ENCODE measurements at regions of chr20 and their contacts with region 1.

Region 1: GRCh38 chr20:19661717-19662636 is 96.1 kb upstream of the RIN2 start:
- H3K4me3 ChIP-seq: no peak overlapping the region
- H3K27ac ChIP-seq: no peak overlapping the region
- H3K4me1 ChIP-seq: no peaks in the 10 kb centered on the region
- CTCF ChIP-seq: peak; percentile 77

Region 2: DNA sequence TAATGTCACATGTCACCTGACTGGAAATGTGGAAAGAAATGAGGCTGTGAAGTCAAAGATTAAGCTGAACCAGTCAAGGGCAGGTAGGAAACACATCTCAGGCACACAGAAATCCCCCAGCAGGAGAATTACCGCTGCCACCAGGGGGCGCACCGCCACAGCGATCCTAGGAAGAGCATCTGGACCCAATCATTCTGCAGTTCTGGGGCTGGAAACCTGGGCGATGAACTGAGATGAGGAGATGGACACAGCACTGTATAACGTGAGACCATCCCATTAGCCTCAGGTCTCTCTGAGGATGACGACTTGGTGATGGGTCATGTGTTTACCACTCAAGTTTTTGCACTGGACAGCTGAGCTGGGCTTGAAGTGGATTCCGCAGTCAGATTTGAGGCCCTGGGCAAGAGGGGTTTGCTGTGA is 456.0 kb before region 1 on chr20:
- CTCF ChIA-PET with region 1: interaction called, 33 read pairs
- POLR2A ChIA-PET with region 1: no interaction called
- H3K4me3 ChIP-seq: no peak overlapping the region
- H3K27ac ChIP-seq: no peak overlapping the region
- H3K4me1 ChIP-seq: no peaks in the 10 kb centered on the region
- CTCF ChIP-seq: peak; percentile 56

Region 3: GRCh38 chr20:19502169-19502568 is 159.8 kb before region 1 on chr20:
- CTCF ChIA-PET with region 1: no interaction called
- POLR2A ChIA-PET with region 1: no interaction called
- H3K4me3 ChIP-seq: no peak overlapping the region
- H3K27ac ChIP-seq: no peak overlapping the region
- H3K4me1 ChIP-seq: no peaks in the 10 kb centered on the region
- CTCF ChIP-seq: no peak

Region 4: DNA sequence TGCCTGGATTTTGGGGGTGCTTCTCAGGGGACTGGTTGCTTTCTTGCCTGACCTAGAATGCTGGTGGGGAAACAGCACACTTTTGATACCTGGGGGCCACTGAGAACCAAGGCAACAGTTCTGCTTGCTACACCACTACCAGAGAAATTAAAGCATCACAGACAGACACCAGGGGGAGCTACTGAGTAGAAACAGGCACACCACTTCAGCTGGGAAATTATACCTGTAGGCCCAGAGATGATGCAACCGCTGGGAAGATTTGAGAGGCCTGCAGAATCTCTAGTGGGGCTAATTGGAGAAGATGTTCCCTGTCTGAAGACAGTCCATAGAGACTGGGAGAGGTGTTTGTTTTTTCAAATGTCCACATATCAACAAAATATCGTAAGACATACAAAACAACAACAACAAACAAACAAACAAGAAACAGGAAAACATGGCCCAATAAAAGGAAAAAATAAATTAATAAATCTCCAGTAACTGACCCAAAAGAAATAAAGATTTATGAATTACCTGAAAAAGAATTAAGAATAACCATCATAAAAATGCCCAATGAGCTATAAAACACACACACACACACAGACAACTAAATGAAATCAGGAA is 33.3 kb before region 1 on chr20:
- CTCF ChIA-PET with region 1: interaction called, 38 read pairs
- POLR2A ChIA-PET with region 1: no interaction called
- H3K4me3 ChIP-seq: no peak overlapping the region
- H3K27ac ChIP-seq: no peak overlapping the region
- H3K4me1 ChIP-seq: no peaks in the 10 kb centered on the region
- CTCF ChIP-seq: no peak

Region 5: GRCh38 chr20:19633985-19634384 is 28.0 kb before region 1 on chr20:
- CTCF ChIA-PET with region 1: interaction called, 38 read pairs
- POLR2A ChIA-PET with region 1: no interaction called
- H3K4me3 ChIP-seq: no peak overlapping the region
- H3K27ac ChIP-seq: no peak overlapping the region
- H3K4me1 ChIP-seq: no peaks in the 10 kb centered on the region
- CTCF ChIP-seq: no peak

Region 6: GRCh38 chr20:19642860-19643259 is 19.1 kb before region 1 on chr20:
- CTCF ChIA-PET with region 1: interaction called, 13 read pairs
- POLR2A ChIA-PET with region 1: no interaction called
- H3K4me3 ChIP-seq: no peak overlapping the region
- H3K27ac ChIP-seq: no peak overlapping the region
- H3K4me1 ChIP-seq: no peaks in the 10 kb centered on the region
- CTCF ChIP-seq: no peak

Region 7: GRCh38 chr20:19648024-19648423 is 14.0 kb before region 1 on chr20:
- CTCF ChIA-PET with region 1: interaction called, 20 read pairs
- POLR2A ChIA-PET with region 1: no interaction called
- H3K4me3 ChIP-seq: no peak overlapping the region
- H3K27ac ChIP-seq: no peak overlapping the region
- H3K4me1 ChIP-seq: no peaks in the 10 kb centered on the region
- CTCF ChIP-seq: no peak

Region 8: DNA sequence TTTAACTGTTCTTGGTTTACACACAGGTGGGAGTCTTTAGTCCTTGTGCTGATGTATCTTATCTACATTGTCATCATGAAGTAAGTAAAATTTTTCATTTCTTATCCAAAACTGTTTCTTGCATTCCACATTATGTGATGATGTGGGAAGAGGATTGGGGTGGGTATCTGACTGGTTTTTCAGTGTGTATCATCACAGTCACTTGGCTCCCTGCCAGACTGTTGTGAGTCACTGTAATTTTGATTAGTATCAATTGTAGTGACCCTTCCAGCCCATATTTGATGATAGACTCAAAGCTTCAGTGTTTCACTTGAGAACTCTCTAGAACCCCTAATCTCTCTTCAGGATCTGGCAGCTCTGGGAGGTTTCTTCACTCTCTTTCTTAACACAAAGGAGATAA is 11.6 kb after region 1 on chr20:
- CTCF ChIA-PET with region 1: interaction called, 17 read pairs
- POLR2A ChIA-PET with region 1: no interaction called
- H3K4me3 ChIP-seq: no peak overlapping the region
- H3K27ac ChIP-seq: no peak overlapping the region
- H3K4me1 ChIP-seq: no peaks in the 10 kb centered on the region
- CTCF ChIP-seq: no peak

Measured in HEK293 (cell line).